Activated T-helper 1 cell treated with anti-CD3 and anti-CD28 coated beads, Interleukin-12 subunit alpha, Interleukin-12 subunit beta, Interleukin-2, Interleukin-4 antibody, amounts not matched to agents 30 ng/mL and 10 ng/mL and 1 ng/mL, durations not matched to agents 14 hours and 24 hours and 36 hours (primary cell): ENCODE measurements at regions of chr11 and their contacts with region 1.

Region 1: GRCh38 chr11:85595285-85595884 is 31.8 kb downstream of the DLG2 start:
- DNase-seq: no peak
- H3K4me3 Mint-ChIP-seq: no peak overlapping the region
- H3K27ac Mint-ChIP-seq: no peak overlapping the region
- H3K4me1 Mint-ChIP-seq: no peaks in the 10 kb centered on the region
- H3K27me3 Mint-ChIP-seq: peaks cover 6% of the 10 kb centered on the region

Region 2: DNA sequence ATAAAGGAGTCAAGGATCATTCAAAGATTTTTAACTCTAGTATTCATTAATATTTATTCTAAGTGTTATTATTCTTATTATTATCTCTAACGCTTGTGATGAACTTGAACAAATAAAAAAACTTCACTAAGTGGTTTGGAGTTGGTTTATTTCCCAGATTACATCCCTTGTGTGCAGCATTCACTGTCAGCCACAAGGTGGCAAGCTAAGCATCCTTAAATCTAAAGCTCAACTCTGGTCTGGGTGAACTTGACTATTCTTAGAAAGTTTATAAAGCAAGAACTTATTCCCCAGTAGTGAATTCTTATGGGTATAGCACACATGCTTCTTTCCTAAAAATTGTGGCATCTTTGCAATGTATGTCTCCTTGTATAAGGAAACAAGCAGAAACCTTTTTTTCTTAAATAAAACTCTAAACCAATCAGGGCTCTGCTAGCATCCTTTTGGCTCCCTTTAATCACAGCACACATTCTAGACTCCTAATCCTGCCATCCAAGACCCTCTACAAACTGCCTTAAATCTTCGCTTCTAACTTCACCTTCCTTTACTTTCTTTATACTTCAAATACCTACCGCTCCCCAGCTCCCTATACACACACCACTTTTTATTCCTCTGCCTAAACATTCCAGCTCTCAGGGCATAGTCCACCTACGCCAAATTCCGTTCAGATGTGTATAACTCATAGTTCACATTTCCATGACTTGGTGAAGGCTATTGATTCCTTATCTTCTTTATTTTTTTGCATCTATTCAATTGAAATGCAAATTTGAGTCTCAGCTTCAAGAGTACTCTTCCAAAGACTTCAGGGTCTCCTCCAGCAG is 1037.1 kb before region 1 on chr11:
- intact Hi-C with region 1: loop called (anchors 2 kb)
- DNase-seq: no peak
- H3K4me3 Mint-ChIP-seq: no peak overlapping the region
- H3K27ac Mint-ChIP-seq: no peak overlapping the region
- H3K4me1 Mint-ChIP-seq: no peaks in the 10 kb centered on the region
- H3K27me3 Mint-ChIP-seq: no peaks in the 10 kb centered on the region

Region 3: DNA sequence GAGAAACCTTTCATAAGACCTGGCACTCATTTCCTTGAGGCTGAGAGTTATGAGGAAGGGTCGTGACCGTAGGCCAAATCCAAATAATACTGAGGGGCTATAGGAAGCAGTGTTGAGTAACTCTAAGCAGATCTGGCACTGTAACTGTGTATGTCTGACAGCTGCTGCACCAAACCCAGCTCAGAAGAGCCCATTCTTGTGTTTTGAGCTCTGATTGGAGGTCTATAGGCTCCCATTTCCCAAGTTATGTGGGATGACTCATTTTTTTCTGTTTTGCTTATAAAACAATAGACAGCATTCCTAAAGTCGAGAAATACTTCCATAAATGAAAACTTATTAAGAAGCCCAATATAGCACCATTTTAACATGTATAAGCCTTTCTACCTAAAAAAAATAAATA is 614.1 kb before region 1 on chr11:
- intact Hi-C with region 1: no loop called
- DNase-seq: no peak
- H3K4me3 Mint-ChIP-seq: no peak overlapping the region
- H3K27ac Mint-ChIP-seq: no peak overlapping the region
- H3K4me1 Mint-ChIP-seq: no peaks in the 10 kb centered on the region
- H3K27me3 Mint-ChIP-seq: no peaks in the 10 kb centered on the region

Region 4: GRCh38 chr11:85647604-85648299 is 52.4 kb after region 1 on chr11 and contains the start of gene TMEM126A:
- intact Hi-C with region 1: loop called (anchors 1 kb)
- DNase-seq: peak; percentile 88
- H3K4me3 Mint-ChIP-seq: peak within 1 kb of the TSS; percentile 93
- H3K27ac Mint-ChIP-seq: peak within 1 kb of the TSS; percentile 91
- H3K4me1 Mint-ChIP-seq: peaks cover 25% of the 10 kb centered on the region
- H3K27me3 Mint-ChIP-seq: peaks cover 26% of the 10 kb centered on the region
- total RNA-seq, gene TMEM126A: 46.0 and 47.7 TPM in 2 replicates

Region 5: GRCh38 chr11:85810871-85811611 is 215.7 kb after region 1 on chr11 and contains the start of gene SYTL2:
- intact Hi-C with region 1: loop called (anchors 5 kb)
- DNase-seq: peak; percentile 83
- H3K4me3 Mint-ChIP-seq: peak within 1 kb of the TSS; percentile 94
- H3K27ac Mint-ChIP-seq: peak within 1 kb of the TSS; percentile 85
- H3K4me1 Mint-ChIP-seq: peaks cover 52% of the 10 kb centered on the region
- H3K27me3 Mint-ChIP-seq: no peaks in the 10 kb centered on the region
- total RNA-seq, gene SYTL2: 37.1 and 38.7 TPM in 2 replicates

Region 6: DNA sequence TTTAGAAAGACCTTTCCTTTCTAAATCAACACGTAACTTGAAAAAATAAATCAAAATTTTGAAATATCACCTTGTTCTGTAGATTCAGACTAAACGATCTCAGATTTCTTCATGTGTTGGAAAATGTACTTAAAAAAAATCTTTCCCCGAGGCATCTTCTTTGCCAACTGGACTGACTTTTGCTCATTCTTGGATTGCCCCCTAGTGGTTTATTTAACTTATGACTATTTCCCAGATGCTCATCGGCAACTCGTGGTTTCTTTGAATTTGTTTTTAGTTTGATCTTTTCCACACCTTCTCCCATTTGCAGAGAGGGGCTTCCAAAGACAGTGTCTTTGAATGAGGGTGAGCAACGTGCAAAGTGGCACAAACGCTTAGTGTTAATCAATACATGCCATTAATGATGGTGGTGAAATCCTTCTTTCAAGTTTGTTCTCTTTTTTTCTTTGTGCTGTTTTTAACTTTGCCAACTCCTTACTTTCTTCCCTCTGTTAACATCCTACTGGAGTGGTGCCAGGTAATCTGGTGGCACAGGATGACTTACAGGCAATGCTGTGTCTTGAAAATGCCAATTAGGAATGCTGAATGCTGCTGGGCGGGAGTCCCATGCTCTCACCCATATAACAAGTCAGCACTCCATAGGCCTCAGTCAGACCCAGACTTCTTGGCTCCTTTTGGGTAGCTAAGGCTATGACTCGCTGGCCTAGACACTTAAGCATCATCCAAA is 1223.2 kb after region 1 on chr11:
- intact Hi-C with region 1: loop called (anchors 1 kb)
- DNase-seq: no peak
- H3K4me3 Mint-ChIP-seq: no peak overlapping the region
- H3K27ac Mint-ChIP-seq: no peak overlapping the region
- H3K4me1 Mint-ChIP-seq: peaks cover 31% of the 10 kb centered on the region
- H3K27me3 Mint-ChIP-seq: peaks cover 24% of the 10 kb centered on the region